ENCODE measurements at regions of chr16 and their contacts with region 1.

Region 1: DNA sequence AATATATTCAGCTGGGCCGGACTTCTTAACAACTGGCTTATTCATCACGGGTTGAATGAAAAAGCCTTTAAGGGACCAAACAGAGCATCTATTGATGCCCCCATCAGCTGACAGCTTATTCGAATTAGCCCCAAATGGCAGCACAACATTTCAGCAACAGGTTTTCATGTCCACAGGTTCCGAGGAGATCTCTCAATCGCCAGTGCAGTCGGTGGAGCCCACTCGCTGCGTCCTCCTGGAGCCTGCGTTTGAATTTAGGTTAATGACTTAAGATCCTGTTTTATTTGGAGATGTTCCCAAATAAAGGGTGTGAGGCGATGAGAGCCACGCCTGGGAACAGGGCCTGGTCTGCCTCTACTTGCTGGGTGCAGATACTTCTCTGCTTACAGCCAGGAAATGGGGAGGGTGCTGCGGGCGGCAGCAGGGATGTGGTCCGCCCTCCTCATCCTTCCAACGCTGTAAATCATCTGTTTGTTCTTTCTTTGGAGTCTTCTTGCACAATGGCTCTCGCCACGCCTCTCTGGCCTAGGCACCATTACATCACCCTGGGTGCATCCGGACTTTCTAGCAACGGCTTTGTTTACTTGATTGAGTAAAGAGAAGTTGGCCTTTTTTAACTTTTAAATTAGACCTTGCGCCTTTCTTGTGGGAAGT is 22.6 kb downstream of the NDE1 start:
- DNase-seq: peak; percentile 77
- ATAC-seq: peak; percentile 97
- H3K4me3 Mint-ChIP-seq: peak overlapping the region; percentile 80
- H3K27ac Mint-ChIP-seq: peak overlapping the region; percentile 98
- H3K4me1 Mint-ChIP-seq: peaks cover 43% of the 10 kb centered on the region
- H3K27me3 Mint-ChIP-seq: no peaks in the 10 kb centered on the region

Region 2: GRCh38 chr16:15653227-15653626 is 19.4 kb before region 1 on chr16:
- POLR2A ChIA-PET with region 1: interaction called, 23 read pairs
- DNase-seq: no peak
- ATAC-seq: no peak
- H3K4me3 Mint-ChIP-seq: peak overlapping the region; percentile 100
- H3K27ac Mint-ChIP-seq: peak overlapping the region; percentile 42
- H3K4me1 Mint-ChIP-seq: peaks cover 42% of the 10 kb centered on the region
- H3K27me3 Mint-ChIP-seq: no peaks in the 10 kb centered on the region

Region 3: DNA sequence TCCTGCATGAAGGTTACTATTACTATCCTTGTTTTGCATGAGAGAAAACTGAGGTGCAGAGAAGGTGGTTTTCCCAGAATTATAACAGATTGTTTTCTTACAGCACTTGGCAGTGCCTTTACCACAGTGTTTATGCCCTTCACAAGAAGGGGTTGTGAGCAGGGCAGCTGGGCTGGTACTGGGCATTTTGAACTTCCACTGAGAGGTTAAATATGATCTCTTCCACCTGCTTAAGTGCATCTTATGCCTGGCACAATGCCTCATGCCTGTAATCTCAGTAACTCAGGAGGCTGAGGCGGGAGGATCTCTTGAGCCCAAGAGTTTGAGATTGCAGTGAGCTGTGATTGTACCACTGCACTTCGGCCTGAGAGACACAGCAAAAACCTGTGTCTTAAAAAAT is 13.6 kb after region 1 on chr16:
- POLR2A ChIA-PET with region 1: no interaction called
- DNase-seq: no peak
- ATAC-seq: no peak
- H3K4me3 Mint-ChIP-seq: no peak overlapping the region
- H3K27ac Mint-ChIP-seq: no peak overlapping the region
- H3K4me1 Mint-ChIP-seq: peaks cover 5% of the 10 kb centered on the region
- H3K27me3 Mint-ChIP-seq: no peaks in the 10 kb centered on the region

Measured in activated naive CD8-positive, alpha-beta T cell treated with anti-CD3 and anti-CD28 coated beads, Interleukin-2, amount 10 ng/mL, durations not matched to agents 7 days and 5 days (primary cell).